Naive thymus-derived CD4-positive, alpha-beta T cell (primary cell): ENCODE measurements at regions of chr6 and their contacts with region 1.

Region 1: DNA sequence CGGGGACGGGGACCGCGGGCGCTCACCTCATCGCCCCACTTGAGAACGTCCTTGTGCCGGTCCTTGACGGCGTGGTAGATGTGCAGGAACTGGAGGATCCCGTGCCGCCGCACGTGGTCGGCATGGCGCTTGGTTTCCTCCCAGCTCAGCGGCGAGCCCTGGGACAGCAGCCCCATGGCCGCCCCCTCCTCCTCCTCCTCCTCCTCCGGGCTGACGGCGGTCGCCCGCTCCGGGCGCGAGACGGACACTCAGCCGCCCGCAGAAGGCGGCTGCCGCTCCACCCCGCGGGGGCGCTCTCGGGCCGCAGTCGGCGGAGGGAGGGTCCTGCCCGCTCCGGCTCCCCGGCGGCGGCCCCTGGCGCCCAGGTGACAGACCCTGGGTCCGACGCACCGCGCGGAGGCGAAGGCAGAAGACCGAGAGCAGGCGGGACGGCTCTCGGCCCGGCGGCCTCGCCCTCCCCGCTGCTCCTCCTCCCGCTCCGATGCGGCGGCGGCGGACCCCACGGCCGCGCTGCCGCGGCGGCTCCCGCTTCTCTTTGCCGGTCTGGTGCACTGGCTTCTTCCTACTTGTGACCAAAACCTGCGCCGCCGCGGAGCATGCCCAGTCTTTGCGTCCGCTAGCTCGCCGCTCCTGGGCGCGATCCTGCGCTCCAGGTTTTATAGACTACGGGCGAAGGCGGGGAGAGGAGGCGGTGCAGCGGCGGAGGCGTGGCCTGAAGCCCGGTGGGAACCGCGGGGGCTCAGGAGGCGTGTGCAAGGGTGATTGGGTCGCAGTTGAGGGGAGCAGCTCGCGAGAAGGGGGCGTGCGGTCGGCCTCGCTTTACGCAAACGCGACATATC is at the start of gene GCLC:
- DNase-seq: peak; percentile 70 to 85 (median 81)
- ATAC-seq: peak; percentile 75
- H3K4me3 ChIP-seq: peak within 1 kb of the TSS; percentile 83
- H3K4me3 Mint-ChIP-seq: peak within 1 kb of the TSS; percentile 87 to 100 (median 96)
- H3K27ac ChIP-seq: peak within 1 kb of the TSS; percentile 67
- H3K27ac Mint-ChIP-seq: peak within 1 kb of the TSS; percentile 84 to 94 (median 91)
- H3K4me1 ChIP-seq: peaks cover 22 to 23% of the 10 kb centered on the region in 2 donors
- H3K4me1 Mint-ChIP-seq: peaks cover 29 to 80% (median 66%) of the 10 kb centered on the region in 7 donors
- H3K27me3 ChIP-seq: no peaks in the 10 kb centered on the region
- H3K27me3 Mint-ChIP-seq: peaks cover 0 to 21% (median 0%) of the 10 kb centered on the region in 5 donors
- total RNA-seq, gene GCLC: 18.5 to 37.5 (median 27.6) TPM

Region 2: GRCh38 chr6:52399511-52400312 is 1145.0 kb before region 1 on chr6:
- CTCF ChIA-PET with region 1: no interaction called
- POLR2A ChIA-PET with region 1: no interaction called
- intact Hi-C with region 1: loop called in 1 of 2 experiments (anchors 10 kb)
- DNase-seq: peak in 7 of 9 donors; percentile 21 to 60 (median 48)
- ATAC-seq: peak; percentile 58
- H3K4me3 ChIP-seq: no peak overlapping the region
- H3K4me3 Mint-ChIP-seq: peak overlapping the region; percentile 26 to 84 (median 74)
- H3K27ac ChIP-seq: peak overlapping the region; percentile 89
- H3K27ac Mint-ChIP-seq: peak overlapping the region; percentile 91 to 100 (median 96)
- H3K4me1 ChIP-seq: peaks cover 48 to 70% of the 10 kb centered on the region in 2 donors
- H3K4me1 Mint-ChIP-seq: peaks cover 40 to 96% (median 77%) of the 10 kb centered on the region in 7 donors
- H3K27me3 ChIP-seq: no peaks in the 10 kb centered on the region
- H3K27me3 Mint-ChIP-seq: peaks cover 0 to 3% (median 0%) of the 10 kb centered on the region in 5 donors

Region 3: GRCh38 chr6:52664186-52664990 is 880.3 kb before region 1 on chr6:
- CTCF ChIA-PET with region 1: no interaction called
- POLR2A ChIA-PET with region 1: no interaction called
- intact Hi-C with region 1: loop called (anchors 10 kb)
- DNase-seq: peak in 8 of 9 donors; percentile 22 to 73 (median 34)
- ATAC-seq: peak; percentile 78
- H3K4me3 ChIP-seq: peak overlapping the region; percentile 68
- H3K4me3 Mint-ChIP-seq: no peak overlapping the region
- H3K27ac ChIP-seq: peak overlapping the region; percentile 28
- H3K27ac Mint-ChIP-seq: no peak overlapping the region
- H3K4me1 ChIP-seq: peaks cover 0 to 5% of the 10 kb centered on the region in 2 donors
- H3K4me1 Mint-ChIP-seq: peaks cover 0 to 6% (median 0%) of the 10 kb centered on the region in 7 donors
- H3K27me3 ChIP-seq: peaks cover 0 to 3% of the 10 kb centered on the region in 2 donors
- H3K27me3 Mint-ChIP-seq: no peaks in the 10 kb centered on the region

Region 4: DNA sequence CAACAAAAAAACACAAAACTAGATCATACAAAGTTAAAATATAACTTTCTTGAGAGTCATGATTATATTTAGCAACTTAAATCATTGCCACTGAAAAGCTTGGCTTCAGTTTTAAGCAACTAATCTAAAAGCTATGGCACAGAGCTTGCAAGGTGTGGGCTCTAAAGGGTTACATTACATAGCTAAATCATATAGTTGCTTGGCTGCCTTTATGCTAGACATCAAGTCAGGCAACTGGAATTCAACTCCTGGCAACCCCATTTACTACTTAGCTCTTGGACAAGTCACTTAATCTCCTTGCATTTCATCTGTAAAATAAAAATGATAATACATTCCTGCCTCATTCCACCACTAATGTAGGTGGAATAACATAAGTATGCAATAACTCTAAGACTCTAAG is 355.1 kb before region 1 on chr6:
- CTCF ChIA-PET with region 1: no interaction called
- POLR2A ChIA-PET with region 1: no interaction called
- intact Hi-C with region 1: loop called in 1 of 2 experiments (anchors 2 kb)
- DNase-seq: no peak
- ATAC-seq: no peak
- H3K4me3 ChIP-seq: no peak overlapping the region
- H3K4me3 Mint-ChIP-seq: no peak overlapping the region
- H3K27ac ChIP-seq: no peak overlapping the region
- H3K27ac Mint-ChIP-seq: no peak overlapping the region
- H3K4me1 ChIP-seq: peaks cover 12 to 26% of the 10 kb centered on the region in 2 donors
- H3K4me1 Mint-ChIP-seq: peaks cover 8 to 39% (median 29%) of the 10 kb centered on the region in 7 donors
- H3K27me3 ChIP-seq: no peaks in the 10 kb centered on the region
- H3K27me3 Mint-ChIP-seq: peaks cover 0 to 2% (median 0%) of the 10 kb centered on the region in 5 donors

Region 5: DNA sequence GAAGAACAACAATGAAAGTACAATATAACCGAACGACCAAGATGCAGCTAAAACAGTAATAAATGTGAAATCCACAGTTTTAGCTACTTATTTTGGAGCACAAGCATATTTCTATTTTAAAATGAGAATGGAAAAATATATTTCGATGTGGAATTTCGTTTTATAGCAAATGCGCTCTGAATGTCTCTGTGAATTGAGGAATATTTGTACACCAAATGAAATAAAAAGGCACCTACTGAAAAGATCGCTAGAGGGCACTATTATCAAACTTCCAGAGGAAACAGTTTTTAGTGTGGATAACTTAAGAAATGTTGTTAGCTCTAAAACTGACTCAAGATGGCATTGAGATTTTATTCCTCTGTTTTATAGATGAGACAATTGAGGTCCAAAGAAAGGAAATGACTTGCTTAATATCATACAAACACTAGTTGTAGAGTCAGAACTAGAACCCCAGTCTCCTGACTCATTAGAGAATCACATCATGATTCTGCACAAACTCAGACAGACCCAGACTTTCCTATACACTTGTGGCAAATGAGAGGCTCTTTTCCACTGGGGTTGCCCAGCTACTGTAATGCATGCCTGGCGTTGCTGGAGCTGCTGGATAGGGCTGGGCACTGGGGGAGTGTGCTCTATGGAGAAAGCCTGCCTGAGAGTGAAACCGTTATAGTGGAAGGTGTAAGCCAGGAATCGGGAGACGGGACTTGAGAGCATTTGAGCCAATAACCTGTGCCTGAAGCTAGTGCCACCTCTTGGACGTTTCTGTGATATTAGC is 51.6 kb before region 1 on chr6:
- CTCF ChIA-PET with region 1: interaction called, 4 read pairs
- POLR2A ChIA-PET with region 1: no interaction called
- intact Hi-C with region 1: loop called (anchors 1 to 2 kb)
- DNase-seq: peak in 7 of 9 donors; percentile 22 to 65 (median 49)
- ATAC-seq: peak; percentile 66
- H3K4me3 ChIP-seq: no peak overlapping the region
- H3K4me3 Mint-ChIP-seq: no peak overlapping the region
- H3K27ac ChIP-seq: no peak overlapping the region
- H3K27ac Mint-ChIP-seq: peak overlapping the region in 1 of 9 donors; percentile 18
- H3K4me1 ChIP-seq: no peaks in the 10 kb centered on the region
- H3K4me1 Mint-ChIP-seq: peaks cover 0 to 7% (median 4%) of the 10 kb centered on the region in 7 donors
- H3K27me3 ChIP-seq: no peaks in the 10 kb centered on the region
- H3K27me3 Mint-ChIP-seq: peaks cover 0 to 34% (median 17%) of the 10 kb centered on the region in 5 donors

Region 6: DNA sequence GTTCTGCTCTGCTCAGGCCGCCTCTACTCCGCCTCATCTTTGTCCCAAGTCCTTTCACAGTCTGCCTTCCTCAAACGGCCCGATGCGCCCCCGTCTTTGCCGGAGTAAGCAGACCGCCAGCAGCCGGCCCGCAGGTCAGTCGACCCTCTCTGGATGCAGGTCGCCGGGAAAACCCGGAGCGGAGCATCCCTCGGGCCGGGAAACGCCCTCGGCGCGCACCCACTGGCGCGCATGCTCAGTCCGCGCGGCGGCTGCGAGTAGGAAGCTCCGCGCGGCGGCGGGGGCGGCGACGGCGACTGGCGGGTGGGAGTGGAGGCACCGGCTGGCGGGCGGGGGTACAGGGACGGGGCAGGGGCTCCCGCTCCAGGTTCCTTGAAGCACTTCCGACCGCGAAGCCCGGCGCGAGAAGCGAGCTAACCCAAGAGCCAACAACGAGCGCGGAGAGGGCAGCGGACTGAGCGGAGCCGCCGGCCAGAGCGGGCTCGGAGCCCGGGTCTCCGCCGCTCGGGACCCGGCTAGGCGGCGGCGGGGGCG is 250.1 kb after region 1 on chr6 and contains the start of gene LRRC1:
- CTCF ChIA-PET with region 1: no interaction called
- POLR2A ChIA-PET with region 1: interaction called, 3 read pairs
- intact Hi-C with region 1: loop called (anchors 1 kb)
- DNase-seq: peak; percentile 61 to 94 (median 76)
- ATAC-seq: peak; percentile 78
- H3K4me3 ChIP-seq: peak within 1 kb of the TSS; percentile 96
- H3K4me3 Mint-ChIP-seq: peak within 1 kb of the TSS; percentile 93 to 98 (median 96)
- H3K27ac ChIP-seq: peak within 1 kb of the TSS; percentile 43
- H3K27ac Mint-ChIP-seq: peak within 1 kb of the TSS in 8 of 9 donors; percentile 75 to 91 (median 86)
- H3K4me1 ChIP-seq: peaks cover 7 to 13% of the 10 kb centered on the region in 2 donors
- H3K4me1 Mint-ChIP-seq: peaks cover 21 to 33% (median 28%) of the 10 kb centered on the region in 7 donors
- H3K27me3 ChIP-seq: peaks cover 0 to 8% of the 10 kb centered on the region in 2 donors
- H3K27me3 Mint-ChIP-seq: peaks cover 7 to 55% (median 18%) of the 10 kb centered on the region in 5 donors
- total RNA-seq, gene LRRC1: 1.2 to 3.6 (median 3.4) TPM